PC-9 (cell line): ENCODE measurements at regions of chr20 and their contacts with region 1.

Region 1: GRCh38 chr20:62793912-62794724 is 2.2 kb upstream of the MRGBP start:
- DNase-seq: peak; percentile 80 to 97
- H3K4me3 ChIP-seq: peak overlapping the region; percentile 85
- H3K27ac ChIP-seq: peak overlapping the region; percentile 11; the same call in 1 of the 2 replicates
- H3K4me1 ChIP-seq: peaks cover 29% of the 10 kb centered on the region
- H3K27me3 ChIP-seq: no peaks in the 10 kb centered on the region
- CTCF ChIP-seq: no peak

Region 2: GRCh38 chr20:62368976-62369814 is 424.9 kb before region 1 on chr20:
- CTCF ChIA-PET with region 1: interaction called, 11 read pairs
- POLR2A ChIA-PET with region 1: no interaction called
- intact Hi-C with region 1: loop called (anchors 5 kb)
- DNase-seq: peak; percentile 53 to 79
- H3K4me3 ChIP-seq: peak overlapping the region; percentile 58; the same call in 1 of the 2 replicates
- H3K27ac ChIP-seq: peak overlapping the region; percentile 35; the same call in 1 of the 2 replicates
- H3K4me1 ChIP-seq: peaks cover 44% of the 10 kb centered on the region
- H3K27me3 ChIP-seq: no peaks in the 10 kb centered on the region
- CTCF ChIP-seq: peak; percentile 23; the same call in 1 of the 2 replicates

Region 3: DNA sequence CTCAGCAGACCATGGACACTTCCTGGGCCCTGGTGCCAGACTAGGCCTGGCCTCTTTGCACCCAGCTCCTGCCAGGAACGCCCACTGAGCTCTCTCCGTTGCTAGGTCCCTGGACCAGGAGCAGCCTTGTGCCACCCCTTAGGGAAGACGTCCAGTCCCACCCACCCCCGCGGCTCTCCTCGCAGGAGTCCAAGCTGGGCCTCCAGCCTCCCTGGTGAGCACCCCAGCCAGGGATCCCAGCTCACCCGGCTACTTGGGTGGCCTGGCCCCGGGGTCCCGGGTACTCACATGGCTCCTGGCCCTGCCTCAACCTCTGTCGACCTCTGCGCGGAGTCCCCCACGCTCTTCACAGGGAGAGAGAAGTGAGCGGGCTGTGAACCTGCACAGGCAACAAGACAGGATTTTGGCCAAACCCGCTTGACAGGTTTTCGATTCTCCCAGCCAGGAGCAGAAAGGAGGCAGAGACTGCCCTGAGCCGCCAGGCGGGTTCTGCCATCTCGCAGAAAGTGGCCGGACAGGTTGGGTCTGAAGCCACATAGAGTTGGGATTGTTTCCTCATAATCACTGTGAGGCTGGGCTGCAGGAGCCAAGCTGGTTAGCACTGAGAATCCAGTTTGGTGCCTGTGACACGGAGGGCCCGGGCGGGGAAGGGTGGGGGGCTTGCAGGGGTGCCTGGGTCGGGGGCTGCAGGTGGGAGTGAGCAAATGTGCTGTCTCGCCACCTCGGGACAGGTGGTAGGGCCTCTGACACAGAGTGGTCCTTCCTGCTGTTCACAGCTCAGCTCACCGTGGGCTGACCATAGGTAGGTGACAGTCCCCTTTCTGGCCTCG is 366.7 kb before region 1 on chr20 and contains the start of gene RBBP8NL:
- CTCF ChIA-PET with region 1: no interaction called
- POLR2A ChIA-PET with region 1: no interaction called
- intact Hi-C with region 1: loop called (anchors 5 kb)
- DNase-seq: peak; percentile 97 to 98
- H3K4me3 ChIP-seq: peak within 1 kb of the TSS; percentile 64
- H3K27ac ChIP-seq: peak within 1 kb of the TSS; percentile 45
- H3K4me1 ChIP-seq: peaks cover 38% of the 10 kb centered on the region
- H3K27me3 ChIP-seq: no peaks in the 10 kb centered on the region
- CTCF ChIP-seq: peak; percentile 60
- total RNA-seq, gene RBBP8NL: 8.7 and 14.0 TPM in 2 replicates

Region 4: DNA sequence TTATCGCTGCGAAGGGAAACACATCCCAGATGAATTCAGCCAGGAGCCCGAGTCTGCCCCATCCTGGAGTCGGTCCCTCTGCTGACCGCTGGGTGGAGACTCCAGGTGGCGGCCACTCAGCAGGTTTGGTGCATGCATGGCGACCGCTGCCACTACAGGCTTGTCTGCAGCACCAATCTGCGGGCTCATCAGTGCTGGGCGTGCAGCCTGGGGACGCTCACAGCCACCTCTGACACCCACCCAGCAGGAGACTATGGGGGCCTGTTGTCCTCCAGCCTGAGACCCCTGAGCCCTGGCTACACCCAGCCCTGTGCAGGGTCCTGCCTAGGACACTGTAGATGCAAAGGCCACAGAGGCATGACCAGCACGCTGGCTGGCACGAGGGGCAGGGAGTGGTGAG is 277.8 kb before region 1 on chr20:
- CTCF ChIA-PET with region 1: interaction called, 5 read pairs
- POLR2A ChIA-PET with region 1: no interaction called
- intact Hi-C with region 1: loop called (anchors 5 kb)
- DNase-seq: peak; percentile 44 to 71
- H3K4me3 ChIP-seq: no peak overlapping the region
- H3K27ac ChIP-seq: no peak overlapping the region
- H3K4me1 ChIP-seq: no peaks in the 10 kb centered on the region
- H3K27me3 ChIP-seq: peaks cover 68% of the 10 kb centered on the region
- CTCF ChIP-seq: peak; percentile 78

Region 5: DNA sequence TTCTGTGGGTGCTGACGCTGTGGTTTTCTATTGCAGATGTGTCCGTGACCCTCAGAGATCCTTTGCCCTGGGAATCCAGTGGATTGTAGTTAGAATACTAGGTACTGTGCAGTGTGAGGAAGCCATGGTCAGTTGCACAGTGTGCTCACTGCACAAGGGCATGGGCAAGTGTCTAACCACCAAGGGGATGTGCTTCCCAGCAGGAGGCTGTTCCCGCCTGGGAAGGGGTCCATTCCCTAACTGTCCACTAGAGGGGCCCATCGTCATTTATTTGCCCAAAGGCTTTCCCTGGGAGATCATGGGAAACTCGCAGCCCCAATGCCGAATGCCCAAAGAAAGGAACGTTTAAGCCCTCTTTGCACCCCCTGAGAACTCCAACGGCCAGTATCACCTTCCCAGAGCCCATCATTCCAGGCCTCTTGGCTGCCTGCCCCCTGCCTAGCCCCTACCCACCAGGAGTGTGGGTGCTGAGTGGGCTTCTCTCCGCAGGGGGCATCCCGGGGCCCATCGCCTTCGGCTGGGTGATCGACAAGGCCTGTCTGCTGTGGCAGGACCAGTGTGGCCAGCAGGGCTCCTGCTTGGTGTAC is 125.6 kb before region 1 on chr20:
- CTCF ChIA-PET with region 1: interaction called, 14 read pairs
- POLR2A ChIA-PET with region 1: interaction called, 7 read pairs
- intact Hi-C with region 1: loop called (anchors 1 kb)
- DNase-seq: peak; percentile 53 to 76
- H3K4me3 ChIP-seq: no peak overlapping the region
- H3K27ac ChIP-seq: no peak overlapping the region
- H3K4me1 ChIP-seq: no peaks in the 10 kb centered on the region
- H3K27me3 ChIP-seq: no peaks in the 10 kb centered on the region
- CTCF ChIP-seq: peak; percentile 91

Region 6: DNA sequence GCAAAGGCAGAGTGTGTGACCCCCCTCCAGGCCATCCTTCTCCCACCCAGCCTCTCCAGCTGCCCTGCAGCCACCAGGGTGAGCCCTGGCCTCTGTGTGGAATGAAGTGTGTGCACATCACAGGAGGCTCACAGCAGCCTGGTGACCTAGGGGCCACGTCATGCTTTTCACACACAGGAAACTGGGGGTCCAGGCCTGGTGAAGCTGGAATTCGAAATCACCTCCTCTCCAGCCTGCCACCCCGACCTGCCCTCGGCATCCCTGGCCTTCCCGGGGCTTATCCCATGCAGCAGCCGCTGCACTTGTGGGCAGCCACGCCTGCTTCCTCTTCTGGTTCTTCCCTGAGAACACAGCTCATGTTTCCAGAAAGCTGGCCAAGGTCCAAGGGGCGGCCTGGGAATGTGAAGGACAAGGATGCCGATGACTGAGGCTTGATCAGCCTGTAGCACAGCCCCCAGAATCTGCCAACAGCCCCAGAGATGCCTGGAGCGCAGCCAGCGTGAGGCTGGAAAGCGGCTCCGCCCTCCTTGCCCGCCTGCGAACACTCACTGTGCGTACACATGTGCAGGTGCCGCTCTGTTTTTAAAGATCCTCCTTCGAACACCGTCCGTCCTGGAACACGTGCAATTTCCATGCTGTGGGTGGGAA is 89.7 kb before region 1 on chr20:
- CTCF ChIA-PET with region 1: interaction called, 9 read pairs
- POLR2A ChIA-PET with region 1: interaction called, 8 read pairs
- intact Hi-C with region 1: loop called (anchors 1 kb)
- DNase-seq: peak; percentile 93 to 98
- H3K4me3 ChIP-seq: peak overlapping the region; percentile 32; the same call in 1 of the 2 replicates
- H3K27ac ChIP-seq: peak overlapping the region; percentile 81
- H3K4me1 ChIP-seq: peaks cover 40% of the 10 kb centered on the region
- H3K27me3 ChIP-seq: no peaks in the 10 kb centered on the region
- CTCF ChIP-seq: no peak

Region 7: GRCh38 chr20:63518351-63518861 is 724.3 kb after region 1 on chr20:
- CTCF ChIA-PET with region 1: no interaction called
- POLR2A ChIA-PET with region 1: no interaction called
- intact Hi-C with region 1: no loop called
- DNase-seq: no peak
- H3K4me3 ChIP-seq: no peak overlapping the region
- H3K27ac ChIP-seq: no peak overlapping the region
- H3K4me1 ChIP-seq: peaks cover 7% of the 10 kb centered on the region; the same call in 1 of the 2 replicates
- H3K27me3 ChIP-seq: peaks cover 12% of the 10 kb centered on the region
- CTCF ChIP-seq: no peak